ENCODE measurements at regions of chr20 and their contacts with region 1.

Region 1: GRCh38 chr20:60210779-60211617 is 252.8 kb downstream of the CDH26 start:
- DNase-seq: peak; percentile 57 to 64 (median 62)
- H3K4me3 ChIP-seq: no peak overlapping the region
- H3K4me3 Mint-ChIP-seq: peak overlapping the region; percentile 39 to 73
- H3K27ac ChIP-seq: no peak overlapping the region
- H3K27ac Mint-ChIP-seq: peak overlapping the region in 2 of 7 donors; percentile 11 to 26
- H3K4me1 ChIP-seq: no peaks in the 10 kb centered on the region
- H3K4me1 Mint-ChIP-seq: peaks cover 17% of the 10 kb centered on the region
- H3K27me3 ChIP-seq: no peaks in the 10 kb centered on the region
- H3K27me3 Mint-ChIP-seq: peaks cover 2 to 11% (median 2%) of the 10 kb centered on the region in 3 donors
- CTCF ChIP-seq: peak; percentile 96

Region 2: GRCh38 chr20:60123652-60124051 is 87.3 kb before region 1 on chr20:
- intact Hi-C with region 1: loop called in 1 of 2 experiments (anchors 10 kb)
- DNase-seq: no peak
- H3K4me3 ChIP-seq: no peak overlapping the region
- H3K4me3 Mint-ChIP-seq: no peak overlapping the region
- H3K27ac ChIP-seq: no peak overlapping the region
- H3K27ac Mint-ChIP-seq: no peak overlapping the region
- H3K4me1 ChIP-seq: peaks cover 4 to 8% of the 10 kb centered on the region in 2 donors
- H3K4me1 Mint-ChIP-seq: peaks cover 22% of the 10 kb centered on the region
- H3K27me3 ChIP-seq: no peaks in the 10 kb centered on the region
- H3K27me3 Mint-ChIP-seq: peaks cover 0 to 1% (median 1%) of the 10 kb centered on the region in 3 donors
- CTCF ChIP-seq: no peak

Region 3: DNA sequence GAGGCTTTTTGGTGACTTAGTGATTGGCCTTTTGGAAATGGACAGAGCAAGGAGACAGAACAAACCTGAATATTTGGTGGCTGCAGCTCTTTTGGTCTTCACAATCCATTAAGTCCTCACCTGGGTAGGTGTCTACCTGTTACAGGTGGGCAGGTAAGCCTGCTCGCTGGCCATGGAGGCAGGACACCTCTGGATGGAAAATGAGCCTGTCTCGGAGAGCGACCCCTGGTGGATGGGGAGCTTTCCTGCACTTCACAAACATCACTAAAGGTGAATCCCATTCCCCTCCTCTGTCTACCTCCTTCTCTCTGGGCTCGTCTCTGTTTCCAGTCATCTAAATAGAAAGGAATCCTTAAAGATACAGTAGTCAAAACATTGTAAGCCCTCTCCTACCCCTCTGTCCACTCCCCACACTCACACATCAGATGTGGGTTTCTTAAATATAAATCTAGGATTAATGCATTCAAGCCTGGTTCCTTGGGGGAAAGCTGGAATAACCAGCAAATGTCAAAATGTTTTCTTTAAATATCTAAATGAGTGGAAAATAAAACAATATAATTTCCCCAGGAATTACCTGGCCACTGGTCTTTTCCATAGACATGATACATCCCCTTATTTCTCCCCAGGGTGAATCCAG is 52.1 kb after region 1 on chr20:
- intact Hi-C with region 1: loop called (anchors 2 kb)
- DNase-seq: peak; percentile 45 to 52 (median 51)
- H3K4me3 ChIP-seq: no peak overlapping the region
- H3K4me3 Mint-ChIP-seq: no peak overlapping the region
- H3K27ac ChIP-seq: no peak overlapping the region
- H3K27ac Mint-ChIP-seq: no peak overlapping the region
- H3K4me1 ChIP-seq: no peaks in the 10 kb centered on the region
- H3K4me1 Mint-ChIP-seq: peaks cover 14% of the 10 kb centered on the region
- H3K27me3 ChIP-seq: no peaks in the 10 kb centered on the region
- H3K27me3 Mint-ChIP-seq: no peaks in the 10 kb centered on the region
- CTCF ChIP-seq: peak; percentile 96

Region 4: GRCh38 chr20:61220160-61220559 is 1009.2 kb after region 1 on chr20:
- intact Hi-C with region 1: loop called in 1 of 2 experiments (anchors 5 kb)
- DNase-seq: no peak
- H3K4me3 ChIP-seq: no peak overlapping the region
- H3K4me3 Mint-ChIP-seq: no peak overlapping the region
- H3K27ac ChIP-seq: no peak overlapping the region
- H3K27ac Mint-ChIP-seq: peak overlapping the region in 1 of 7 donors; percentile 17
- H3K4me1 ChIP-seq: no peaks in the 10 kb centered on the region
- H3K4me1 Mint-ChIP-seq: no peaks in the 10 kb centered on the region
- H3K27me3 ChIP-seq: no peaks in the 10 kb centered on the region
- H3K27me3 Mint-ChIP-seq: peaks cover 3 to 8% (median 6%) of the 10 kb centered on the region in 3 donors
- CTCF ChIP-seq: no peak

Region 5: DNA sequence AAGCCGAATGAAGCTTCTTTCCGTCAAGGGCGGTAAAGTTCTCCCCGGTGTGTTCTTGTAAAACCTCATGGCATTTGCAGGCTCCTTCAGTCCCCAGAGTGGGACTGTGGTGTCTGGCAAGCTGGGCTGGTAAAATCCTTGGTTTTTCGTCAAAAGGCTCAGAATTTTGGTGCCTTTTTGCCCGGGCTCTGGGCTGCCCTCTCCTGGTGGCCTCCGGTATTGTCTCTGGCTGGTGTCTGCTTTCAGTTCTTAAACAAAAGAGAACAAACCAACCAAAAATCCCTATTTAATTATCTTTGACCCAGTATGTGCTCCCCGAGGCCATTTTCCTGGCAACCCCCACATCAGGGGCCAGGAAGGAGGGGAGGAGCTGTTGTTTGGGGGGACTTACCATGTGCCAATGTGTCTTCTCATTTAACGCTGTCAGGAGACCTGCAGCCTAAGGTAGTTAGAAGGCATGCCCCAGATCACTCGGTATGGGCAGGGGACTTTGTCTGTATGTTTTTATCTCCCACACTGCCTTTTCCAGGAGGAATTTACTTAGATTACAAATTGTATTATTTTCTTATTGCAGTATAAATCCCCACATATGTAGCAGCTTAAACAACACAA is 1052.2 kb after region 1 on chr20:
- intact Hi-C with region 1: loop called (anchors 10 kb)
- DNase-seq: peak in 1 of 3 donors; percentile 1
- H3K4me3 ChIP-seq: no peak overlapping the region
- H3K4me3 Mint-ChIP-seq: peak overlapping the region in 1 of 2 donors; percentile 10
- H3K27ac ChIP-seq: no peak overlapping the region
- H3K27ac Mint-ChIP-seq: no peak overlapping the region
- H3K4me1 ChIP-seq: no peaks in the 10 kb centered on the region
- H3K4me1 Mint-ChIP-seq: peaks cover 4% of the 10 kb centered on the region
- H3K27me3 ChIP-seq: no peaks in the 10 kb centered on the region
- H3K27me3 Mint-ChIP-seq: peaks cover 2 to 6% (median 5%) of the 10 kb centered on the region in 3 donors
- CTCF ChIP-seq: peak; percentile 88